Common myeloid progenitor, CD34-positive (primary cell): ENCODE measurements at regions of chr1 and their contacts with region 1.

Region 1: DNA sequence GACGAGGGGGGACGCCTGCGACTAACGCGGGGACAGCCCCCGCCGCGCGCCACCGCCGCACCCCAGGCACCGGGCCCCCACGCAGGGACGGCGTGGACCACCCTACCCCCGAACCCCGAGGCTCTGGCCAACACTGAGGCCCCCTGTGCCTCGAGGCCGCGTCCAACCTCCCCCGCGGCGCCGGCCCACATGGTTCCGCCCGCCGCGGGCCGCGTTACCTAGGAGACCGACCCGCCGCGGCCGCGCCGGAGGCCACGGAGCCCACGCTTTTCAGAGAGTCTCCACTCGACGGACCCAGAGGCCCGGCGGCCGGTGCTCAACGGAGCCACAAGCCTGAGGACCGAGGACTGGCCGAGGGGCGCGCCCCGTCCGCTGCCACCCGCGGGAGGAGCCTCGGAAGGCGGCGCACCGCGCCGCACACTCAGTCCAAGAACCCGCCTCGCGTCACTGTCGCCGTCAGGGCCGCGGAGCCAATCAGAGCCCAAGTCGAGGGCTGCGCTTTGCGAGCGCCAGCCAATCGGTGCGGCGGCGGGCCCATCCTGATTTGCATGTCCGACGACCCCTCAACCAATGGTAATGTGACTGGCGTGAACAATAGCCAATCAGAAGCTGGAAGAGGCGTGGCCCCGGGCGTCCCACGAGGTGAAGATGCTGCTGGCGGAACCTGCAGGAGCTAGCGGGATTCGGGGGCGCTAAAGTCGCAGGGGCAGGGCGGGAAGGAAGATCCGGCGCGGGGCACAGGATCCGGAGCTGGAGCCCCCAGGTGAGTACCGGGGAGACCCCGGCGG is at the start of gene NPHP4:
- DNase-seq: peak; percentile 99 to 100 (median 100)
- H3K4me3 ChIP-seq: peak within 1 kb of the TSS; percentile 66 to 86 (median 78)
- H3K27ac ChIP-seq: peak within 1 kb of the TSS; percentile 90 to 94
- H3K4me1 ChIP-seq: peaks cover 2 to 39% (median 36%) of the 10 kb centered on the region in 4 experiments
- H3K27me3 ChIP-seq: no peaks in the 10 kb centered on the region

Region 2: DNA sequence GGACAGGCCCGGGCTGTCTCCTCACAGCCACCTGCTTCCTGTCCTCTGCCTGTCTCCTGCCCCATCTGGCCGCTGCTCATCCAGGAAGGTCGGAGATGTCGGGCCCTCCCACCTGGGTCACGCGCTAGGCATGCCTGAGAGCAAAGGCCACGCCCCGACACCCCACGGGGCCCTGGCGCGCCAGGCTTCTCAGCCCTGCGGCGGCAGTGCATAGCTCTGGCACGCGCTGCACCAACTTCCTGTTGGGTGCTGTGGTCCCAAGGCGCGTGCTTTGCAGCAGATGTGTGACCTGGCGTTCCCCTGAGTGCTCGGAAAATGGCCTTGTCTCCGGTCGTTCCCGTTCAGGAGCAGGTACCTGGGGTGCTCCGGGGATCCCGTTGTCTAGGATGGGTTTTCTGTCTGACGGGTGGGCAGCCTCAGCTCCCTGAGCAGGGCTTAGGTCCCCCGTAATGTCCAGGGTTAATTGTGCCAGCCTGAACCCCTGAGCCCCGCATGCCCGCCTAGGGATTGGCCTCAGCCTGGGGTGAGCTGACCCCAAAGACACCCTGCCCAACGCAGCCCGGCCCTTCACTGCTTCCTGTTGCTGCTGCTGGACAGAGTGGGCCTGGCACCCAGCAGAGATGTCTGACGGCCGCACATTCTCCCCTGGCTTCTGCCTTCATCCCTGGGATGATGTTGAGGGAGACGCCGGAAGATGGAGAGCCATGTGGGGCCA is 34.0 kb after region 1 on chr1:
- CTCF ChIA-PET with region 1: interaction called, 20 read pairs
- POLR2A ChIA-PET with region 1: interaction called, 6 read pairs
- DNase-seq: peak; percentile 93 to 99 (median 97)
- H3K4me3 ChIP-seq: peak overlapping the region in 6 of 7 experiments; percentile 35 to 90 (median 68)
- H3K27ac ChIP-seq: peak overlapping the region; percentile 93
- H3K4me1 ChIP-seq: peaks cover 9 to 63% (median 62%) of the 10 kb centered on the region in 4 experiments
- H3K27me3 ChIP-seq: no peaks in the 10 kb centered on the region